ENCODE measurements at regions of chr5 and their contacts with region 1.

Region 1: GRCh38 chr5:149942199-149942598 is 2.4 kb downstream of the PDE6A start:
- DNase-seq: no peak
- H3K4me3 ChIP-seq: no peak overlapping the region
- H3K4me3 Mint-ChIP-seq: peak overlapping the region; percentile 53
- H3K27ac Mint-ChIP-seq: peak overlapping the region; percentile 87
- H3K4me1 ChIP-seq: peaks cover 84% of the 10 kb centered on the region
- H3K4me1 Mint-ChIP-seq: peaks cover 66% of the 10 kb centered on the region
- H3K27me3 ChIP-seq: no peaks in the 10 kb centered on the region
- H3K27me3 Mint-ChIP-seq: no peaks in the 10 kb centered on the region
- CTCF ChIP-seq: peak in 1 of 2 experiments; percentile 19

Region 2: GRCh38 chr5:149549461-149550267 is 392.5 kb before region 1 on chr5:
- CTCF ChIA-PET with region 1: no interaction called
- POLR2A ChIA-PET with region 1: no interaction called
- intact Hi-C with region 1: no loop called
- DNase-seq: peak; percentile 49 to 57
- H3K4me3 ChIP-seq: peak overlapping the region; percentile 76
- H3K4me3 Mint-ChIP-seq: peak overlapping the region; percentile 99
- H3K27ac Mint-ChIP-seq: peak overlapping the region; percentile 99
- H3K4me1 ChIP-seq: peaks cover 30% of the 10 kb centered on the region
- H3K4me1 Mint-ChIP-seq: peaks cover 17% of the 10 kb centered on the region
- H3K27me3 ChIP-seq: no peaks in the 10 kb centered on the region
- H3K27me3 Mint-ChIP-seq: no peaks in the 10 kb centered on the region
- CTCF ChIP-seq: no peak

Region 3: GRCh38 chr5:149887622-149888183 is 54.5 kb before region 1 on chr5:
- CTCF ChIA-PET with region 1: no interaction called
- POLR2A ChIA-PET with region 1: no interaction called
- intact Hi-C with region 1: loop called (anchors 1 kb)
- DNase-seq: peak; percentile 84 to 88
- H3K4me3 ChIP-seq: peak overlapping the region; percentile 5; the same call in 1 of the 2 replicates
- H3K4me3 Mint-ChIP-seq: peak overlapping the region; percentile 64
- H3K27ac Mint-ChIP-seq: peak overlapping the region; percentile 90
- H3K4me1 ChIP-seq: peaks cover 25% of the 10 kb centered on the region
- H3K4me1 Mint-ChIP-seq: peaks cover 21% of the 10 kb centered on the region
- H3K27me3 ChIP-seq: no peaks in the 10 kb centered on the region
- H3K27me3 Mint-ChIP-seq: no peaks in the 10 kb centered on the region
- CTCF ChIP-seq: no peak

Region 4: GRCh38 chr5:150189728-150190502 is 247.7 kb after region 1 on chr5 and contains the start of gene SLC6A7:
- CTCF ChIA-PET with region 1: no interaction called
- POLR2A ChIA-PET with region 1: no interaction called
- intact Hi-C with region 1: no loop called
- DNase-seq: no peak
- H3K4me3 ChIP-seq: no peak within 1 kb of the TSS
- H3K4me3 Mint-ChIP-seq: no peak within 1 kb of the TSS
- H3K27ac Mint-ChIP-seq: no peak within 1 kb of the TSS
- H3K4me1 ChIP-seq: peaks cover 23% of the 10 kb centered on the region
- H3K4me1 Mint-ChIP-seq: peaks cover 9% of the 10 kb centered on the region
- H3K27me3 ChIP-seq: no peaks in the 10 kb centered on the region
- H3K27me3 Mint-ChIP-seq: no peaks in the 10 kb centered on the region
- CTCF ChIP-seq: no peak
- total RNA-seq, gene SLC6A7: not detected in 2 replicates